ENCODE measurements at regions of chr10 and their contacts with region 1.

Region 1: DNA sequence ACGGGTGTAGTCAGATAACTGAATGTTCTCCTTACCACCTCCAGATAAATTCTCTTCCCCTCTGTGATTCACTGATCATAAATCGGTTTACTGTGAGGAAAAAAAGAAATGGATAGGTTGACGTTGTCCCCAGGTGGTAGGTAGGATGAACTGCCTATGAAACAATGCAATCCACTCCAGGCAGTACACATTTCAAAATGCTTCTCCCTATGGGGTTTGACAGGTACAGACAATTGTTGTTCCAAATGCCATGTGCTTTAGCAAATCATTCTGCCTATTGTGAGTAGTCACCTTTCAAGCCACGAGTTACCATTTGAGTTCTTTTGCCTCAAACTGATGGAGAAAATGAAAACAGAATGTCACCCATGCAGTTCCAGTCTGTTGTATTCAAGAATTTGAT is 21.8 kb downstream of the VIM start:
- DNase-seq: no peak
- H3K4me3 ChIP-seq: no peak overlapping the region
- H3K27ac ChIP-seq: no peak overlapping the region
- H3K4me1 ChIP-seq: no peaks in the 10 kb centered on the region
- H3K27me3 ChIP-seq: no peaks in the 10 kb centered on the region
- CTCF ChIP-seq: no peak

Region 2: GRCh38 chr10:16843252-16843870 is 406.5 kb before region 1 on chr10:
- intact Hi-C with region 1: loop called (anchors 5 kb)
- DNase-seq: peak in 2 of 5 donors; percentile 75 to 79
- H3K4me3 ChIP-seq: no peak overlapping the region
- H3K27ac ChIP-seq: no peak overlapping the region
- H3K4me1 ChIP-seq: peaks cover 0 to 3% (median 0%) of the 10 kb centered on the region in 3 donors
- H3K27me3 ChIP-seq: no peaks in the 10 kb centered on the region
- CTCF ChIP-seq: peak; percentile 57

Region 3: GRCh38 chr10:17049195-17049594 is 200.6 kb before region 1 on chr10:
- intact Hi-C with region 1: no loop called
- DNase-seq: no peak
- H3K4me3 ChIP-seq: no peak overlapping the region
- H3K27ac ChIP-seq: no peak overlapping the region
- H3K4me1 ChIP-seq: no peaks in the 10 kb centered on the region
- H3K27me3 ChIP-seq: no peaks in the 10 kb centered on the region
- CTCF ChIP-seq: no peak

Region 4: GRCh38 chr10:17454161-17455014 is 204.6 kb after region 1 on chr10 and contains the start of gene ST8SIA6:
- intact Hi-C with region 1: no loop called
- DNase-seq: peak; percentile 74 to 83 (median 79)
- H3K4me3 ChIP-seq: peak within 1 kb of the TSS in 1 of 3 donors; percentile 49
- H3K27ac ChIP-seq: no peak within 1 kb of the TSS
- H3K4me1 ChIP-seq: peaks cover 0 to 2% (median 0%) of the 10 kb centered on the region in 3 donors
- H3K27me3 ChIP-seq: peaks cover 7% of the 10 kb centered on the region
- CTCF ChIP-seq: no peak
- total RNA-seq, gene ST8SIA6: 0.91 TPM

Measured in kidney (tissue), 22 donors.